ENCODE measurements at regions of chr9 and their contacts with region 1.

Region 1: GRCh38 chr9:6197330-6197729 is 18.3 kb upstream of the IL33 start:
- DNase-seq: no peak
- ATAC-seq: peak in 3 of 4 donors; percentile 43 to 71 (median 46)
- H3K4me3 ChIP-seq: no peak overlapping the region
- H3K27ac ChIP-seq: peak overlapping the region in 2 of 12 donors; percentile 41 to 46
- H3K4me1 ChIP-seq: peaks cover 0 to 29% (median 0%) of the 10 kb centered on the region in 12 donors
- H3K27me3 ChIP-seq: no peaks in the 10 kb centered on the region
- CTCF ChIP-seq: peak; percentile 33 to 75 (median 55)
- POLR2A ChIP-seq: no peak

Region 2: GRCh38 chr9:5510360-5510931 is 686.9 kb before region 1 on chr9 and contains the start of gene PDCD1LG2:
- intact Hi-C with region 1: no loop called
- DNase-seq: no peak
- ATAC-seq: peak in 3 of 4 donors; percentile 27 to 63 (median 55)
- H3K4me3 ChIP-seq: peak within 1 kb of the TSS in 10 of 12 donors; percentile 7 to 58 (median 46)
- H3K27ac ChIP-seq: peak within 1 kb of the TSS; percentile 47 to 94 (median 63)
- H3K4me1 ChIP-seq: peaks cover 0 to 58% (median 41%) of the 10 kb centered on the region in 12 donors
- H3K27me3 ChIP-seq: no peaks in the 10 kb centered on the region
- CTCF ChIP-seq: no peak
- POLR2A ChIP-seq: no peak
- total RNA-seq, gene PDCD1LG2: 0.86 to 10.5 (median 1.4) TPM

Region 3: GRCh38 chr9:6277417-6277816 is 80.1 kb after region 1 on chr9:
- intact Hi-C with region 1: loop called in 1 of 10 experiments (anchors 10 kb)
- DNase-seq: no peak
- ATAC-seq: no peak
- H3K4me3 ChIP-seq: no peak overlapping the region
- H3K27ac ChIP-seq: no peak overlapping the region
- H3K4me1 ChIP-seq: peaks cover 0 to 7% (median 0%) of the 10 kb centered on the region in 12 donors
- H3K27me3 ChIP-seq: no peaks in the 10 kb centered on the region
- CTCF ChIP-seq: no peak
- POLR2A ChIP-seq: no peak

Region 4: GRCh38 chr9:6305954-6306563 is 108.7 kb after region 1 on chr9:
- intact Hi-C with region 1: loop called (anchors 1 to 5 kb)
- DNase-seq: no peak
- ATAC-seq: peak in 3 of 4 donors; percentile 52 to 74 (median 61)
- H3K4me3 ChIP-seq: no peak overlapping the region
- H3K27ac ChIP-seq: no peak overlapping the region
- H3K4me1 ChIP-seq: no peaks in the 10 kb centered on the region
- H3K27me3 ChIP-seq: peaks cover 0 to 4% (median 0%) of the 10 kb centered on the region in 9 donors
- CTCF ChIP-seq: peak; percentile 31 to 80 (median 66)
- POLR2A ChIP-seq: no peak

Measured in heart left ventricle (tissue), 16 donors.